Activated T-helper 1 cell treated with anti-CD3 and anti-CD28 coated beads, Interleukin-12 subunit alpha, Interleukin-12 subunit beta, Interleukin-2, Interleukin-4 antibody, amounts not matched to agents 30 ng/mL and 10 ng/mL and 1 ng/mL, durations not matched to agents 14 hours and 24 hours and 36 hours (primary cell): ENCODE measurements at regions of chr10 and their contacts with region 1.

Region 1: GRCh38 chr10:119207367-119207668 is at the start of gene GRK5:
- DNase-seq: peak; percentile 98
- H3K4me3 Mint-ChIP-seq: peak within 1 kb of the TSS; percentile 99
- H3K27ac Mint-ChIP-seq: peak within 1 kb of the TSS; percentile 99
- H3K4me1 Mint-ChIP-seq: peaks cover 49% of the 10 kb centered on the region
- H3K27me3 Mint-ChIP-seq: no peaks in the 10 kb centered on the region
- total RNA-seq, gene GRK5: 25.3 and 25.8 TPM in 2 replicates

Region 2: GRCh38 chr10:119070395-119071165 is 136.7 kb before region 1 on chr10:
- intact Hi-C with region 1: no loop called
- DNase-seq: no peak
- H3K4me3 Mint-ChIP-seq: no peak overlapping the region
- H3K27ac Mint-ChIP-seq: no peak overlapping the region
- H3K4me1 Mint-ChIP-seq: peaks cover 40% of the 10 kb centered on the region
- H3K27me3 Mint-ChIP-seq: no peaks in the 10 kb centered on the region

Region 3: DNA sequence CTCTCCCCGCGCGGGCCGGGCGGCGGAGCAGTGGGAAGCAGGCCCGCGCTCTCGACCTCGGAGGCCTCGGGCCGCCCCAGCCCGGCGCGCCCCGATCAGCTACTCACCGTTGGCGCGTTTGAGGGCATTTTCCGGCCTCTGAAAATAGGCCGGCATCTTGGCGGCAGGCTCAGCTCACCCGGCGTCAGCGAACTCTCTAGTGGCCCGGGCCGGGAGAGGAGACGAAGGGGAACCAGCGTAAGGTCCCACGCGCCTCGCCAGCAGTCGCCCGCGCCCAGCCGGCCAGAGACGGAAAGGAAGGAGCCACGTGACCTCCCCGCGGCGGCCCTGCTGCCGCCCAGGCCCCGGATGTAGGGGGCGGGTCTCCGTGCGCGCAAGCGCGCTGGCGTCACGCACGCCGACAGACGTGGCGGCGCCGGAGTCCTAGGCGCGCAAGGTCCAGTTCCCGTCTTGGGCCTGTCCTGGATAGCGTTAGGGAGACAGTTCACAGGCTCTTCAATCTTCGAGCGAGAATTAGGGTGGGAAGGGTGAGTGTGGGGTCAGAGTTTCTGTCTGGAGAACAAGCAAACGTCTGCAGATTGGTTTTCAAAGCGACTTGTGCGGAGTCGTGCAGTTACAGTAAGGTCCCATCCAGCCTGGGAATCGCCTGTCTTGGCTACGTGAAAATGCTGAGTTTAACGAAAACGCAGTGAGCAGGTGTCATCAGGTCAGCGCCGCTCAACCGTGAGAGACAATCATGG is 126.6 kb before region 1 on chr10 and contains the start of gene EIF3A:
- intact Hi-C with region 1: loop called (anchors 1 kb)
- DNase-seq: peak; percentile 94
- H3K4me3 Mint-ChIP-seq: peak within 1 kb of the TSS; percentile 98
- H3K27ac Mint-ChIP-seq: peak within 1 kb of the TSS; percentile 94
- H3K4me1 Mint-ChIP-seq: peaks cover 33% of the 10 kb centered on the region
- H3K27me3 Mint-ChIP-seq: no peaks in the 10 kb centered on the region
- total RNA-seq, gene EIF3A: 181 and 183 TPM in 2 replicates

Region 4: GRCh38 chr10:119178372-119179119 is 28.8 kb before region 1 on chr10 and contains the start of gene PRDX3:
- intact Hi-C with region 1: loop called (anchors 1 kb)
- DNase-seq: peak; percentile 89
- H3K4me3 Mint-ChIP-seq: peak within 1 kb of the TSS; percentile 100
- H3K27ac Mint-ChIP-seq: peak within 1 kb of the TSS; percentile 100
- H3K4me1 Mint-ChIP-seq: peaks cover 30% of the 10 kb centered on the region
- H3K27me3 Mint-ChIP-seq: no peaks in the 10 kb centered on the region
- total RNA-seq, gene PRDX3: 158 and 163 TPM in 2 replicates

Region 5: DNA sequence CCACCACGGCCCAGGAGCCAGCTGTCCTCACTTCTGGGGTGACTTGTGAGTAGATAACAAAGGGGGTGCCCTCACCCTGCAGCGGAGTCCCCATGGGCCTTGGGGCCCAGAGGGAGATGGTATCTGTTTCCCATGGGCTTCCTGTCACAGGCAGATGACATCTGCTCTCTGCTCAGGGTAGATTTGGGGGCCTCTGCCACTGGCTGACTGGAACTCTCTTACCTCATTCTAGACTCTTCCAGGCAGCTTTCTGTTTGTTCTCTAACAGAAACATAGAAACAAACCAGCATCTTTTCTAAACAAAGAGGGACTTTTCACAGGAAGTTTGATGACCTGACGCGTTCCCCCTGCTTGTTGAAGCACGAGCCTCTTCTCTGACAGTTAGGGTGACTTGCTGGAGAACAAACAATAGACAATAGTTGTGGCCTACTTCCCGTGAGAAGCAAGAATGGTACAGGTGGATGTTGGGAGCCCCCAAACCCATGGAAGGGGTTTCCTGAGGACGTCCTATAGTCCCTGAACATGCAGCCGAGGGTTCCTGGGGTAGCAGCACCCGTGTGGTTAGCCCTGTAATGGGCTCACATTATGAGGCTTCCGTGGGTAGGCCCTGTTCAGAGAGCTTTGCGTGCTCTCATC is 61.7 kb after region 1 on chr10:
- intact Hi-C with region 1: loop called (anchors 1 kb)
- DNase-seq: peak; percentile 85
- H3K4me3 Mint-ChIP-seq: peak overlapping the region; percentile 43
- H3K27ac Mint-ChIP-seq: peak overlapping the region; percentile 98
- H3K4me1 Mint-ChIP-seq: peaks cover 76% of the 10 kb centered on the region
- H3K27me3 Mint-ChIP-seq: no peaks in the 10 kb centered on the region

Region 6: GRCh38 chr10:119315128-119316001 is 108.0 kb after region 1 on chr10:
- intact Hi-C with region 1: loop called (anchors 1 kb)
- DNase-seq: peak; percentile 64
- H3K4me3 Mint-ChIP-seq: peak overlapping the region; percentile 62
- H3K27ac Mint-ChIP-seq: peak overlapping the region; percentile 95
- H3K4me1 Mint-ChIP-seq: peaks cover 64% of the 10 kb centered on the region
- H3K27me3 Mint-ChIP-seq: peaks cover 12% of the 10 kb centered on the region

Region 7: DNA sequence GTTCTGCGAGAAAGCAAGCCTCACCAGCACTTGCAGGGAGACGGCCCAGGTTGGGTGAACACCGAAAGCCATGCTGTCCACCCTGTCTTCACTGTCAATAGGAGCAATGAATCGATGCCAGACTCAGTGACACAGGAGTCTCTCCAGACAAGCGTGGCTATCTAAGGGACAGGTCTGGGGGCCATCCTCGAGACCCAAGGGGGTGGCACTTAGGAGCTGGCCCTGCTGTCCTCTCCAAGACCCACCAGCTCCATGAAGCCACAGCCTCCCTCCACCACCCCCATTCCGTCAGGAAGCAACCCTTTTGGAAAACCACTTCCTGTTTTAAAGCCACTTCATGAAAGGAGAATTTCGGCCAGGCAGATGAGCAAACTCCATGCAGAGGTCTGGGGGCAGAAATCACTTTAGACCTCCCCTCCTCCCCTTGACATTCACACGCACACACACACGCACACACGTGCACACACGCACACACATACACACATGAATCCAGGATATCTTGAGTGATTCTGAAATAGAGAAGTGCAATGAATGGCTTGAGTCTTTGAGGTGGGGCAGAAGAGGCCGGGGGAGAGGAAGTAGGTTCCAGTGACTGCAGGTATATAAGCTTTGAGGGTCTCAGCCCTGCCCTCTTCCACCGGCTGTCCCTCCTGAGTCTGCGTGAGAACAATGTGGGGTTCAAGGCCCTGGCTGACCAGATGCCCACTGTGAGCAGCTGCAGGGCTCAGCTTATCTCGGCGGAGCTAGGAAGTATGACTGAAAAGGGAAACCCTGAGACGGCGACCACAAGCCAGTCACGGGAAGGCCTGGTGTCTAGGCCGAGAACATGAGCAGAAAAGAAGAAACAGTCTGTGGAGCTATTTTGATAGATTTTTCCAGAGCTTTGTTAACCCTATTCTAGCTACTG is 310.2 kb after region 1 on chr10:
- intact Hi-C with region 1: loop called (anchors 2 kb)
- DNase-seq: peak; percentile 55
- H3K4me3 Mint-ChIP-seq: peak overlapping the region; percentile 54
- H3K27ac Mint-ChIP-seq: peak overlapping the region; percentile 82
- H3K4me1 Mint-ChIP-seq: peaks cover 53% of the 10 kb centered on the region
- H3K27me3 Mint-ChIP-seq: no peaks in the 10 kb centered on the region

Region 8: GRCh38 chr10:119650692-119651513 is 443.6 kb after region 1 on chr10 and contains the start of gene BAG3:
- intact Hi-C with region 1: loop called (anchors 2 kb)
- DNase-seq: peak; percentile 70
- H3K4me3 Mint-ChIP-seq: peak within 1 kb of the TSS; percentile 95
- H3K27ac Mint-ChIP-seq: peak within 1 kb of the TSS; percentile 96
- H3K4me1 Mint-ChIP-seq: peaks cover 50% of the 10 kb centered on the region
- H3K27me3 Mint-ChIP-seq: no peaks in the 10 kb centered on the region
- total RNA-seq, gene BAG3: 30.4 and 30.5 TPM in 2 replicates